Activated B cell treated with CpG ODN at 0.5 μM for 24 hours (primary cell): ENCODE measurements at regions of chr2 and their contacts with region 1.

Region 1: DNA sequence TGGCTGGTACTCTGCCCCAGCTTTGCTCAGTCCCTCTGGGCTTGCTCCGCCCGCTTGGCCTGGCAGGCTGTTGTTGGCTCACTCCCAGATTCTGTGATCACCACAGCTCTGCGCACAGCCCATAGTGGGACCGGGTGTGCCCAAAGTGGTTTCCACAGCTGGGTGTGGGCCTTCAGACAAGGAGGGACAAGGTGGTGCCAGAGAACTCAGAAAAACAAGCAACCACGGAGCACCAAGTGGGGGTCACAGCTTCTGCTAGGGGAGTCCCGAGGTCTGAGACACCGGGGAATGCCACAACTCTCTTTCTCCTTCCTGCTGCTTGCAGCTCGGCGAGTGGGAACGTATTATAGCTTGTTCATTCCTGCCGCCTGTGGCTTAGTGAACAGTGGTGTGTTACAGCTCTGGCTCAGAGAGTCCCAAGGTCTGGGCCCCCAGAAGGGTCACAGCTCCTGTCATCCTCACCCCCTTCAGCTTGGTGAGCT is 9.1 kb upstream of the KYNU start:
- DNase-seq: peak; percentile 28
- ATAC-seq: peak; percentile 15
- H3K4me3 Mint-ChIP-seq: peak overlapping the region; percentile 37
- H3K27ac Mint-ChIP-seq: peak overlapping the region; percentile 96
- H3K4me1 Mint-ChIP-seq: peaks cover 66% of the 10 kb centered on the region
- H3K27me3 Mint-ChIP-seq: no peaks in the 10 kb centered on the region
- CTCF ChIP-seq: no peak

Region 2: GRCh38 chr2:142892715-142893114 is 24.4 kb after region 1 on chr2:
- CTCF ChIA-PET with region 1: no interaction called
- POLR2A ChIA-PET with region 1: no interaction called
- intact Hi-C with region 1: no loop called
- DNase-seq: no peak
- ATAC-seq: peak; percentile 77
- H3K4me3 Mint-ChIP-seq: no peak overlapping the region
- H3K27ac Mint-ChIP-seq: peak overlapping the region; percentile 57
- H3K4me1 Mint-ChIP-seq: peaks cover 55% of the 10 kb centered on the region
- H3K27me3 Mint-ChIP-seq: no peaks in the 10 kb centered on the region
- CTCF ChIP-seq: no peak

Region 3: GRCh38 chr2:142914507-142915313 is 46.4 kb after region 1 on chr2:
- CTCF ChIA-PET with region 1: no interaction called
- POLR2A ChIA-PET with region 1: interaction called, 21 read pairs
- intact Hi-C with region 1: loop called (anchors 2 kb)
- DNase-seq: no peak
- ATAC-seq: peak; percentile 93
- H3K4me3 Mint-ChIP-seq: peak overlapping the region; percentile 69
- H3K27ac Mint-ChIP-seq: peak overlapping the region; percentile 86
- H3K4me1 Mint-ChIP-seq: peaks cover 51% of the 10 kb centered on the region
- H3K27me3 Mint-ChIP-seq: no peaks in the 10 kb centered on the region
- CTCF ChIP-seq: no peak

Region 4: DNA sequence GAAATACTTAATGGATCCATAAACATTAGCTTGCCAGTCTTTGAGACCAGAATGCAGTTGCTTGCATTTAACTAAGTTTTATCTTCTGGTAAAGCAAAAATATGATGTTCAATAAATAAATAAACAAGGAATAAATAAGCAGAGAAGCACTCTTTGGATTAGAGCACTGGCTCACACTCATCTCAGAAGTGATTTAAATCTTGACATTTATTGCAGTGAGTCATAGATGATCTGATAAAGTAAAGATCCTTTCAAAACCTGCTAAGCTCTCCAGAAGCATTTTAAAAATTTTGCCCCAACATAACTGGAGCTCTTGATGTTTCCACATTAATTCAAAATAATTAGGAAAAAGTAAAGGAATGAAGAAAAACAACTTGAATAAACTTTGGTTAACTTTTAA is 76.0 kb after region 1 on chr2:
- CTCF ChIA-PET with region 1: no interaction called
- POLR2A ChIA-PET with region 1: interaction called, 10 read pairs
- intact Hi-C with region 1: no loop called
- DNase-seq: no peak
- ATAC-seq: no peak
- H3K4me3 Mint-ChIP-seq: no peak overlapping the region
- H3K27ac Mint-ChIP-seq: no peak overlapping the region
- H3K4me1 Mint-ChIP-seq: peaks cover 12% of the 10 kb centered on the region
- H3K27me3 Mint-ChIP-seq: no peaks in the 10 kb centered on the region
- CTCF ChIP-seq: no peak